Caco-2 (cell line): ENCODE measurements at regions of chr20 and their contacts with region 1.

Region 1: DNA sequence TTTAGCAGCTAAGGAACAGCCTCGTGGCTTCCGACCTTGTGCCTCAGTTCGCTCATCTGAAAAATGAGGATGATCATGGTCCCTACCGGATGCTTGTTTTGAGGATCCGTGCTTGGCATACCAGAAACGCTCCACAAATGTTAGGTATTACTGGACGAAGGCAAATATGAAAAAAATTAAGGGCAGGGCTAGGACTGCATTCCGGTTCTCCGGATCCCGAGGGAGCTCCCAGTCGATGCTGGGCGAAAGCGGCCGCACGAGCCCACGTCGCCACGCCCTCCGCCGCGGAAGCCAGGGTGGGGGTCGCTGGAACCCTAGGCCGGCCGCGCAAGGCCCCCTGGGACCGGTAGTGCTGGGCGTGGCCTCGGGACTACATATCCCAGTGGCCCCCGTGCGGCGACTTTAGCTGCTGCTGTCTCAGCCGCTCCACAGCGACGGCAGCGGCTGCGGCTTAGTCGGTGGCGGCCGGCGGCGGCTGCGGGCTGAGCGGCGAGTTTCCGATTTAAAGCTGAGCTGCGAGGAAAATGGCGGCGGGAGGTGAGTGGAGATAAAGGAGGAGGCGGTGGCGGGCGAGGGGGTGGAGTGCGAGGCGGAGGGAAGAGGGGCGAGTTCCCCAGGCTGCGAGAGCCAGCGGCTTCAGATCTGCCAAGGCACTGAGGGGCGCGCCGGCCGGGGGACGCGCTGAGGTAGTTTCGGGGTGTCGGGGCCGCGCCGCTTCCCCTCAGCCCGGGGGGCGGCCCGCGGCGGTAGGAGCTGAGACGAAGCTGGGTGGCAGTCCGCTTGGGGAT is at the start of gene NCOA3:
- DNase-seq: peak; percentile 100
- H3K4me3 ChIP-seq: peak within 1 kb of the TSS; percentile 98
- H3K4me3 Mint-ChIP-seq: peak within 1 kb of the TSS; percentile 82
- H3K27ac Mint-ChIP-seq: peak within 1 kb of the TSS; percentile 92
- H3K4me1 ChIP-seq: peaks cover 28% of the 10 kb centered on the region
- H3K4me1 Mint-ChIP-seq: peaks cover 35% of the 10 kb centered on the region
- H3K27me3 ChIP-seq: no peaks in the 10 kb centered on the region
- H3K27me3 Mint-ChIP-seq: no peaks in the 10 kb centered on the region
- CTCF ChIP-seq: peak; percentile 64 to 94
- total RNA-seq, gene NCOA3: 96.7 and 97.3 TPM in 2 replicates

Region 2: DNA sequence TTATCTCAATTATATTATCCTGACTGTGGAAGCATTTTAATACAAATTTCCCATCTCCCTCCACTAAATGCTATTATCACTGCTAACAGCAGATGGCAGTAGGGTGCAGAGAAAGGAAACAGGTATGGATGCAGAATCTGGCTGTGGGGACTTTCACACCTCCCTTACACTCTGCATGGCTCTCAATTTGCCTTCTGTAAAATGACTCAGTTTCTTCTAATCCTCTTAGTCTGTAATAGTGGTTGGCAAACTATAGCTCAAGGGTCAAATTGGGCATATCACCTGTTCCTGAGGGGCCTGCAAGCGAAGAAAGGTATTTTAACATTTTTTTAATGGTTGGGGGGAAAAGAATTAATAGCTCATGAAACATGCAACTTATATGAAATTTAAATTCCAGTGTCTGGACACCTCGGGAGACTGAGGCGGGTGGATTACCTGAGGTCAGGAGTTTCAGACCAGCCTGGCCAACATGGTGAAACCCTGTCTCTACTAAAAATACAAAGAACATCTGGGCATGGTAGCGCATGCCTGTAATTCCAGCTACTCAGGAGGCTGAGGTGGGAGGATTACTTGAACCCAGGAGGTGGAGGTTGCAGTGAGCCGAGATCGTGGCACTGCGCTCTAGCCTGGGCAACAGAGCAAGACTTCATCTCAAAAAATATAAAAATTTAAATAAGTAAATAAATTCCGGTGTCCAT is 228.6 kb before region 1 on chr20:
- CTCF ChIA-PET with region 1: no interaction called
- POLR2A ChIA-PET with region 1: interaction called, 3 read pairs
- intact Hi-C with region 1: loop called (anchors 10 kb)
- DNase-seq: peak; percentile 72 to 89
- H3K4me3 ChIP-seq: no peak overlapping the region
- H3K4me3 Mint-ChIP-seq: no peak overlapping the region
- H3K27ac Mint-ChIP-seq: peak overlapping the region; percentile 11
- H3K4me1 ChIP-seq: peaks cover 7% of the 10 kb centered on the region
- H3K4me1 Mint-ChIP-seq: peaks cover 16% of the 10 kb centered on the region
- H3K27me3 ChIP-seq: no peaks in the 10 kb centered on the region
- H3K27me3 Mint-ChIP-seq: no peaks in the 10 kb centered on the region
- CTCF ChIP-seq: peak; percentile 98

Region 3: GRCh38 chr20:47438577-47439381 is 62.9 kb before region 1 on chr20:
- CTCF ChIA-PET with region 1: interaction called, 8 read pairs
- POLR2A ChIA-PET with region 1: interaction called, 41 read pairs
- intact Hi-C with region 1: loop called (anchors 1 kb)
- DNase-seq: peak; percentile 92 to 96
- H3K4me3 ChIP-seq: peak overlapping the region; percentile 2; the same call in 1 of the 2 replicates
- H3K4me3 Mint-ChIP-seq: peak overlapping the region; percentile 64
- H3K27ac Mint-ChIP-seq: peak overlapping the region; percentile 91
- H3K4me1 ChIP-seq: peaks cover 53% of the 10 kb centered on the region
- H3K4me1 Mint-ChIP-seq: peaks cover 28% of the 10 kb centered on the region
- H3K27me3 ChIP-seq: no peaks in the 10 kb centered on the region
- H3K27me3 Mint-ChIP-seq: no peaks in the 10 kb centered on the region
- CTCF ChIP-seq: no peak

Region 4: GRCh38 chr20:47464380-47465101 is 37.1 kb before region 1 on chr20:
- CTCF ChIA-PET with region 1: interaction called, 5 read pairs
- POLR2A ChIA-PET with region 1: interaction called, 6 read pairs
- intact Hi-C with region 1: loop called (anchors 1 kb)
- DNase-seq: peak; percentile 87 to 91
- H3K4me3 ChIP-seq: no peak overlapping the region
- H3K4me3 Mint-ChIP-seq: no peak overlapping the region
- H3K27ac Mint-ChIP-seq: peak overlapping the region; percentile 64
- H3K4me1 ChIP-seq: peaks cover 37% of the 10 kb centered on the region
- H3K4me1 Mint-ChIP-seq: peaks cover 43% of the 10 kb centered on the region
- H3K27me3 ChIP-seq: no peaks in the 10 kb centered on the region
- H3K27me3 Mint-ChIP-seq: no peaks in the 10 kb centered on the region
- CTCF ChIP-seq: peak in 1 of 2 experiments; percentile 70

Region 5: GRCh38 chr20:47487175-47487917 is 14.3 kb before region 1 on chr20:
- CTCF ChIA-PET with region 1: interaction called, 5 read pairs
- POLR2A ChIA-PET with region 1: interaction called, 14 read pairs
- intact Hi-C with region 1: no loop called
- DNase-seq: no peak
- H3K4me3 ChIP-seq: no peak overlapping the region
- H3K4me3 Mint-ChIP-seq: no peak overlapping the region
- H3K27ac Mint-ChIP-seq: no peak overlapping the region
- H3K4me1 ChIP-seq: peaks cover 13% of the 10 kb centered on the region
- H3K4me1 Mint-ChIP-seq: peaks cover 11% of the 10 kb centered on the region
- H3K27me3 ChIP-seq: no peaks in the 10 kb centered on the region
- H3K27me3 Mint-ChIP-seq: no peaks in the 10 kb centered on the region
- CTCF ChIP-seq: no peak

Region 6: GRCh38 chr20:47606414-47606982 is 104.8 kb after region 1 on chr20:
- CTCF ChIA-PET with region 1: no interaction called
- POLR2A ChIA-PET with region 1: no interaction called
- intact Hi-C with region 1: no loop called
- DNase-seq: no peak
- H3K4me3 ChIP-seq: no peak overlapping the region
- H3K4me3 Mint-ChIP-seq: no peak overlapping the region
- H3K27ac Mint-ChIP-seq: no peak overlapping the region
- H3K4me1 ChIP-seq: peaks cover 6% of the 10 kb centered on the region
- H3K4me1 Mint-ChIP-seq: peaks cover 26% of the 10 kb centered on the region
- H3K27me3 ChIP-seq: no peaks in the 10 kb centered on the region
- H3K27me3 Mint-ChIP-seq: no peaks in the 10 kb centered on the region
- CTCF ChIP-seq: no peak